ENCODE measurements at regions of chr5 and their contacts with region 1.

Region 1: DNA sequence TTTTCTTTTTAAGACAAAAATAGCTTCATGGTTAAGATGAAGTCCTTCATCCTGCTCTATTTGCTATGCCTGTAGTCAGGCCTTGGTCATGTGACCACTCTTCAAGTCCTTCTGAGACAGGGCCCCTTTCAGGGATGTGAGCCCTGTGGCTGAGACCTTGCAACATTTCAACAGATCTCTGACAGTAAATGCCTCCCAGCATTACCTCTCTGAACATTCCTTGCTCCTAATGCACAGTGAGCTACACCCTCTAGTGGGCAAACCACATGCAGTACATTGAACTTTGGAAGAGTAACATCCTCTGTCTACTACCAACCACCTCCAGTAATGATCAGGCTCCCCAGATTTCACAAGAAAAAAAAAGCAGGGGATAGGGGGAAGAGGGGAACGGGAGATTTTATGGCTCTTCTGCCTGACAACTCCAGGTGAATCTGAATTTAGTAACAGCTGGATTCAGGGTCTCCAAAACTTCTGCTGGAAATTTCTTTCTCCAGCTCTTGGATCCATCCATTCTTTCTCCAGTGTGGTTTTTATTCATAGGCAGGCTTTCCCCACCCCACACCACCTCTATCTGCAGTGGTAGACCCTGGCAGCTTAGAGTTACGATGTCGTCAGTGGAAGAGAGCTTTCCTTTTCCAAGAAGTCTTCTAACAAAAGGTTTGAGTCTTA is 8.9 kb upstream of the FBXO38 start:
- H3K4me3 ChIP-seq: no peak overlapping the region
- H3K27ac ChIP-seq: no peak overlapping the region
- H3K4me1 ChIP-seq: no peaks in the 10 kb centered on the region
- CTCF ChIP-seq: peak; percentile 47; the same call in 1 of the 2 replicates

Region 2: GRCh38 chr5:148179234-148179824 is 195.5 kb before region 1 on chr5:
- CTCF ChIA-PET with region 1: interaction called, 25 read pairs
- POLR2A ChIA-PET with region 1: no interaction called
- H3K4me3 ChIP-seq: no peak overlapping the region
- H3K27ac ChIP-seq: no peak overlapping the region
- H3K4me1 ChIP-seq: no peaks in the 10 kb centered on the region
- CTCF ChIP-seq: peak; percentile 11; the same call in 1 of the 2 replicates

Region 3: DNA sequence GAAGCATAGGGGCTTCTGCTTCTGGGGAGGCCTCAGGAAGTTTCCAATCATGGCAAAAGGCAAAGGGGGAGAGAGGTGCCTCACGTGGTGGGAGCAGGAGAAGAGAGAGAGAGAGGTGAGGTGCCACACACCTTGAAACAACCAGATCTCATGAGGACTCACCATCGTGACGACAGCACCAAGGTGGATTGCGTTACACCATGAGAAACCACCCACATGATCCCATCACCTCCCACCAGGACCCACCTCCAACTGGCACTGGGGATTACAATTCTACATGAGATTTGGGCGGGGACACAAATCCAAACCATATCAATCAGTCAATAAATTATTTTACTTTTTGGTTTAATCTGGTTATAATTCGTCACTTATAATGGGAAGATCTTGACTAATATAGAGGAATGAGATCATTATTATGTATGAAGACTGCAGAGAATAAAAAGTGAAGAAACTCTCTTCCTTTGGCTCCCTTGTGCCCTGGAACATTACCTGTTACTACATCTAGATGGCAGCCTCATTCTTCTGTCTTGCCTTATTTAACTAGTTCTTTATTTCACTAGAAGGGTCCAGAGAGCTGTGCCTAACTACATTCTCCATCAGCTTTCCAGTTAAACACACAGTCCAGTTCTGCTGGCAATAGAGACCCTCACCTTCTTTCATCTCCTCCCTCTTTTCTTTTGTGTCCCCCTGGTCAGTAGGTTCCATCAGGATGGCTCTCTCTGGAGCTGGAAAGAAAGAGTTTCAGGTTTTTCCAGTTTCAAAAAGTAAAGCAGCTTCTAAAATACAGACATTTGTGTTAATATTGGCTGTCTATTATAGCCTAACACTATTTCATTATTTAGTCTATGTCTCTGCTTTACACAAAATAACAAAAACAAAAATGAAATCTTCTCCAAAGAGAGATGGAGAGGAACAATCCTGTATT is 84.3 kb before region 1 on chr5:
- CTCF ChIA-PET with region 1: interaction called, 59 read pairs
- POLR2A ChIA-PET with region 1: no interaction called
- H3K4me3 ChIP-seq: no peak overlapping the region
- H3K27ac ChIP-seq: no peak overlapping the region
- H3K4me1 ChIP-seq: no peaks in the 10 kb centered on the region
- CTCF ChIP-seq: no peak

Region 4: GRCh38 chr5:148314204-148314603 is 60.6 kb before region 1 on chr5:
- CTCF ChIA-PET with region 1: interaction called, 24 read pairs
- POLR2A ChIA-PET with region 1: no interaction called
- H3K4me3 ChIP-seq: no peak overlapping the region
- H3K27ac ChIP-seq: no peak overlapping the region
- H3K4me1 ChIP-seq: no peaks in the 10 kb centered on the region
- CTCF ChIP-seq: no peak

Region 5: GRCh38 chr5:148364343-148364742 is 10.5 kb before region 1 on chr5:
- CTCF ChIA-PET with region 1: interaction called, 15 read pairs
- POLR2A ChIA-PET with region 1: no interaction called
- H3K4me3 ChIP-seq: no peak overlapping the region
- H3K27ac ChIP-seq: no peak overlapping the region
- H3K4me1 ChIP-seq: no peaks in the 10 kb centered on the region
- CTCF ChIP-seq: no peak

Measured in HEK293 (cell line).